AG04450 (cell line): ENCODE measurements at regions of chr1 and their contacts with region 1.

Region 1: GRCh38 chr1:245771511-245772281 is 616.9 kb downstream of the KIF26B start:
- DNase-seq: peak; percentile 82
- H3K4me3 ChIP-seq: no peak overlapping the region
- H3K27ac ChIP-seq: peak overlapping the region; percentile 89
- H3K27me3 ChIP-seq: no peaks in the 10 kb centered on the region
- CTCF ChIP-seq: no peak

Region 2: GRCh38 chr1:245730801-245731200 is 40.9 kb before region 1 on chr1:
- CTCF ChIA-PET with region 1: no interaction called
- POLR2A ChIA-PET with region 1: no interaction called
- DNase-seq: no peak
- H3K4me3 ChIP-seq: no peak overlapping the region
- H3K27ac ChIP-seq: no peak overlapping the region
- H3K27me3 ChIP-seq: no peaks in the 10 kb centered on the region
- CTCF ChIP-seq: no peak

Region 3: DNA sequence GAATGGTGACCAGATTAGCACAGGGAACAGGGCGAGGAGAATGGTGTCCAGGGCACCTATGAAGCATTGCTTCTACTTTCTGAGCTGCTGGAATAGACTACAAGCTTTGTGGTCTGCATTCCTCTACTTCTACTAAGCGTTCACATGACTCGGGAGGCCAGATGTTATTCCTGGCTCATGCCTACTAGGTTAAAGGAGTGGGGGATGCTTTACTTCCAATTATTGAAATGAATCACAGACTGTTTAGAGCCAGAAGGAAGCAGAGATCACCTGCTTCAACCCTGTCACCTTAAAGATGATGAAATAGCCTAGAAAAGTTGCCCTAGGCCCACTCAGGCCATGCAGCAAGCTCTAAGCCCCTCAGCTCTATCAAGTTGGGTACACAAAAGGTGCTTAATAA is 16.6 kb after region 1 on chr1:
- CTCF ChIA-PET with region 1: interaction called, 3 read pairs
- POLR2A ChIA-PET with region 1: interaction called, 12 read pairs
- DNase-seq: peak; percentile 90
- H3K4me3 ChIP-seq: no peak overlapping the region
- H3K27ac ChIP-seq: peak overlapping the region; percentile 92
- H3K27me3 ChIP-seq: no peaks in the 10 kb centered on the region
- CTCF ChIP-seq: no peak